Vagina (tissue), 2 donors: ENCODE measurements at regions of chr19 and their contacts with region 1.

Region 1: GRCh38 chr19:664913-665443 is 2.0 kb upstream of the RNF126 start:
- DNase-seq: no peak
- H3K4me3 ChIP-seq: peak overlapping the region in 1 of 2 donors; percentile 35
- H3K27ac ChIP-seq: no peak overlapping the region
- H3K4me1 ChIP-seq: peaks cover 42% of the 10 kb centered on the region
- H3K27me3 ChIP-seq: no peaks in the 10 kb centered on the region
- CTCF ChIP-seq: peak; percentile 96
- POLR2A ChIP-seq: no peak

Region 2: DNA sequence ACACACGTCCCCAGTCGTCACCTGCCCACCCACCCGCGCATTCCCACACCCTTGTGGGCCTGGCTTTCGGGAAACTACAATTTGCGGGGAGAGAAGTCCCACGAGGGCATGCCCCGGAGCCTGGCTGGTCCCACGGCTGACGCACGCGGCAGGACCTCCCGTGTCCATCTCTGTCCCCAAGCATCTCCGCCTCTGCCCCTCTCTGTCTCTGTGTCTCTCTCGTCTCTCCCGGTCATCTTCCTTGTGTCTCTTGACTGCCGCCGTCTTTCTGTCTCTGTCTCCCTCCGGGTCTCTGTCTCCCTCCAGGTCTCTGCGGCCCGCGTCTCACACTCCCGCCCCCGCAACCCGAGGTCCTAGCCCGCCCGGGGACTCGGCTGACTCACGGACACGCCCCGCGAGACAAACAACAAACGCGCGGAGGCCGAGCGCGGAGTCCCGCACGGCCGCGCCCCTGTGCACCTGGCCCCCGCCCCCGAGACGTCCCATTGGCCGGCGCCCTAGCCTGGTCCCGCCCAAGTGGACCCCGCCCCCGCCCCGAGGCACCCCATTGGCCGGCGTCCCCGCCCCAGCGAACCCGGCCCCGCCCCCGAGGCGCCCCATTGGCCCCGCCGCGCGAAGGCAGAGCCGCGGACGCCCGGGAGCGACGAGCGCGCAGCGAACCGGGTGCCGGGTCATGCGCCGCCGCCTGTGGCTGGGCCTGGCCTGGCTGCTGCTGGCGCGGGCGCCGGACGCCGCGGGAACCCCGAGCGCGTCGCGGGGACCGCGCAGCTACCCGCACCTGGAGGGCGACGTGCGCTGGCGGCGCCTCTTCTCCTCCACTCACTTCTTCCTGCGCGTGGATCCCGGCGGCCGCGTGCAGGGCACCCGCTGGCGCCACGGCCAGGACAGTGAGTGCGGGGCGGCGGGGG is 25.5 kb before region 1 on chr19 and contains the start of gene FGF22:
- intact Hi-C with region 1: loop called (anchors 1 kb)
- DNase-seq: no peak
- H3K4me3 ChIP-seq: peak within 1 kb of the TSS; percentile 49
- H3K27ac ChIP-seq: peak within 1 kb of the TSS; percentile 39
- H3K4me1 ChIP-seq: peaks cover 22% of the 10 kb centered on the region
- H3K27me3 ChIP-seq: no peaks in the 10 kb centered on the region
- CTCF ChIP-seq: no peak
- POLR2A ChIP-seq: no peak
- total RNA-seq, gene FGF22: not detected

Region 3: GRCh38 chr19:732148-733069 is 67.4 kb after region 1 on chr19:
- intact Hi-C with region 1: loop called (anchors 5 kb)
- DNase-seq: no peak
- H3K4me3 ChIP-seq: no peak overlapping the region
- H3K27ac ChIP-seq: no peak overlapping the region
- H3K4me1 ChIP-seq: no peaks in the 10 kb centered on the region
- H3K27me3 ChIP-seq: no peaks in the 10 kb centered on the region
- CTCF ChIP-seq: no peak
- POLR2A ChIP-seq: no peak